ENCODE measurements at regions of chr5 and their contacts with region 1.

Region 1: GRCh38 chr5:41851116-41851515 is 19.1 kb downstream of the OXCT1 start:
- DNase-seq: no peak
- CTCF ChIP-seq: no peak

Region 2: GRCh38 chr5:40630126-40630525 is 1221.0 kb before region 1 on chr5:
- in situ Hi-C with region 1: no loop called
- DNase-seq: no peak
- CTCF ChIP-seq: no peak

Region 3: DNA sequence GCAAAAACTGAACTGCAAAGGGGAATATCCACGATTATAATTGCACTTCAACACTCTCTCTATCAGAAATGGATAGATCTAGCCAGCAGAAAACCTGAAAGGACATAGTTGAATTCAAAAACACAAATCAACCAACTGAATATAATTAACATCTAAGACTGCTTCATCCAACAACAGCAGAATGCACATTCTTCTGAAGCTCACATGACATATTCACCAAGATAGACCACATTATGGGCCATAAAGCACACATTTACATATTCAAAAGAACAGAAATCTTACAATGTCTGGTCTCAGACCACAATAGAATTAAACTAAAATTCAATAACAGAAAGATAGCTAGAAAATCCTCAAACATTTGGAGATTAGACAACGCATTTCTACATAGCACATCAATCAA is 192.3 kb after region 1 on chr5:
- in situ Hi-C with region 1: loop called (anchors 5 kb)
- DNase-seq: no peak
- CTCF ChIP-seq: no peak

Region 4: DNA sequence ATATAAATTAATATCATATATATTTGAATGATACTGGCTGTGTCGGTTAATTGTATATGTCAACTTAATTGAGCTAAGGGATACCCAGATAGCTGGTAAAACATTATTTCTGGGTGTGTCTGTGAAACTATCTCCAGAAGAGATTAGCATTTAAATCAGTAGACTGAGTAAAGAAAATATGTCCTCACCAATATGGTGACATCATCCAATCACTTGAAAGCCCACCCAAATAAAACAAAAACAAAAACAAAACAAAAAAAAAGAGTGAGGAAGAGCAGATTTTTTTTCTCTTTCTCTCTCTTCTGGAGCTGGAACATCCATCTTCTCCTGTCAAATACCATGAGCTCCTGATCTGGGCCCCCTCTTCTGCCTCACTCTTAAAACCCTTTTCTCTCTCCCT is 889.8 kb after region 1 on chr5:
- in situ Hi-C with region 1: no loop called
- DNase-seq: no peak
- CTCF ChIP-seq: no peak

Measured in GM13976 (cell line).